Activated T-helper 2 cell treated with anti-CD3 and anti-CD28 coated beads, Interferon-gamma antibody, Interleukin-2, Interleukin-4, amounts not matched to agents 10 μg/mL and 5 μg/mL and 100 μg/mL, durations not matched to agents 14 hours and 24 hours and 36 hours (primary cell): ENCODE measurements at regions of chr19 and their contacts with region 1.

Region 1: DNA sequence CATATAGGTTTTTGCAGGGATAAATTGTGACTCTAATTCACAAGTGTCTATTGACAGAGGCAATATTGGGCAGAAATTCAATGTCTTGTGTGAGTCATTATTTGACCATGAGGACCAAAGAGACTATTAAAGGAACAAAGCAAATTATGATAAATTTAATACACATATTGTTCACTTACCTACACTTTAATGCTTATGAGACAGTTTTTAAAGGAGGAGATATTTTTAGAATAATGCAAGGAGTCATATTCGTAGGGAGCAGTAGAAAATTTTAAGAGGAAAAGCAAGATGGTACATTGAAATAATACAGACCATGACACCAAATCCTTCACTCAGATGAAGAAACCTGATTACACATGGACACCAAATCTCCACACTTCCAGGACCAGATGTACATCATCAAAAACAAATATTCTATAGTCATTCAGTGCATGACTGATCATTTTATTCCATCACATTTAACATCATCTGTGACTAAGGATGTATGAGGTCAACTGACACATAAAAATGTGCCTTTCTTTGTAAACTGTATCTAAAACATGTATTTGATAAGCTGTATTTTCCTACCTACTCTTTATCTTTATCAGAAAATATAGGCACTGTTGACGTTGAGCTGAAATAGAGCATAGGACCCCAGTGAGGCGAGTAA is 4.2 kb upstream of the OR7A17 start:
- DNase-seq: no peak
- H3K4me3 Mint-ChIP-seq: no peak overlapping the region
- H3K27ac Mint-ChIP-seq: no peak overlapping the region
- H3K4me1 Mint-ChIP-seq: peaks cover 5% of the 10 kb centered on the region
- H3K27me3 Mint-ChIP-seq: peaks cover 7% of the 10 kb centered on the region

Region 2: GRCh38 chr19:14542711-14543328 is 347.3 kb before region 1 on chr19:
- intact Hi-C with region 1: no loop called
- DNase-seq: no peak
- H3K4me3 Mint-ChIP-seq: no peak overlapping the region
- H3K27ac Mint-ChIP-seq: no peak overlapping the region
- H3K4me1 Mint-ChIP-seq: peaks cover 4% of the 10 kb centered on the region
- H3K27me3 Mint-ChIP-seq: no peaks in the 10 kb centered on the region

Region 3: GRCh38 chr19:14786421-14786851 is 103.7 kb before region 1 on chr19:
- intact Hi-C with region 1: loop called (anchors 10 kb)
- DNase-seq: no peak
- H3K4me3 Mint-ChIP-seq: no peak overlapping the region
- H3K27ac Mint-ChIP-seq: no peak overlapping the region
- H3K4me1 Mint-ChIP-seq: peaks cover 18% of the 10 kb centered on the region
- H3K27me3 Mint-ChIP-seq: peaks cover 4% of the 10 kb centered on the region

Region 4: GRCh38 chr19:14972676-14973075 is 82.6 kb after region 1 on chr19:
- intact Hi-C with region 1: no loop called
- DNase-seq: no peak
- H3K4me3 Mint-ChIP-seq: no peak overlapping the region
- H3K27ac Mint-ChIP-seq: no peak overlapping the region
- H3K4me1 Mint-ChIP-seq: no peaks in the 10 kb centered on the region
- H3K27me3 Mint-ChIP-seq: peaks cover 2% of the 10 kb centered on the region